Ovary (tissue), 10 donors: ENCODE measurements at regions of chr17 and their contacts with region 1.

Region 1: DNA sequence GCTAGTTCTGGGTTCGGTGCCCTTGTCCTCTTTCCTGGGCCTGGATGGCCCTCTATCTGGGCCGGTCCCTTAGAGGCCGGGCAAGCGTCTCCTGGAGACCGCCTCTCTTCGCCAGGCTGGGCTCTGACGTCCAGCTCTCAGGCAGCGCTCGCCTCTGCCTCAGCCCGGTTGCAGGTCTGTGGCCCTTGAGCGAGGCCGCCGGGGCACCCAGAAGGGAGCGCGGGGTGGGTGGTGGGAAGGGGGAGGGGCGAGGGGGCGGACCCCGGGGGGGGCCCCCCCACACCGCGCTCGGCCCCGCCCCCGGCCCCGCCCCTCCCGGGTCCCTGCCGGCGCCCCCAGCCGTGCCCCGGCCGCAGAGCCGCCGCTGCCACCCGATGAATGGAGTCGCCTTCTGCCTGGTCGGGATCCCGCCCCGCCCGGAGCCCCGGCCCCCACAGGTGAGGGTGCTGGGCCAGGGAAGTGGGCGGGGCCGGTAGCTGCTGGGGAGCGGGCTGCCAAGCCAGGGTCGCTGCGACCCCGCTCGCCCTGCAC is at the start of gene ARHGAP23:
- DNase-seq: peak; percentile 69 to 80 (median 75)
- H3K4me3 ChIP-seq: peak within 1 kb of the TSS; percentile 68
- H3K27ac ChIP-seq: peak within 1 kb of the TSS; percentile 84
- H3K4me1 ChIP-seq: peaks cover 3% of the 10 kb centered on the region
- H3K27me3 ChIP-seq: no peaks in the 10 kb centered on the region
- CTCF ChIP-seq: no peak
- EP300 ChIP-seq: no peak
- POLR2A ChIP-seq: no peak
- total RNA-seq, gene ARHGAP23: 13.7 to 76.4 (median 48.9) TPM

Region 2: DNA sequence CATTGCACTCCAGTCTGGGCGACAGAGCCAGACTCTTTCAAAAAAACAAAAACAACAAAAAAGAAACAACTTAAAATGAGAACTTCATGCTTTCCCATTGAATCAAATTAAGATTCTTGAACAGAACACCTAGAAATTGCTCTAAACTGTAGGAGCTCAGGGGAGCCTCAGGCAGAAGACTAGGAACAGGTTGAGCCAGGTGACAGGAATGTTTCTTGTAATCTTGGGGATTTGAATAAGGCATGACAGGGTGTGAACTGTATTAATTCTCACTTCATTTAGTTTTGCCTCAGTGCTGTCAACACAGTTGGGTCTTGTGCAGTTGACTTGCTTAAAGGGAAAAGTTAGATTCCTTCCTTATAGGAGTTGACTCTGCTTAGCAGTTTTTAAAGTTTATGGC is 48.7 kb before region 1 on chr17:
- intact Hi-C with region 1: no loop called
- DNase-seq: no peak
- H3K4me3 ChIP-seq: no peak overlapping the region
- H3K27ac ChIP-seq: no peak overlapping the region
- H3K4me1 ChIP-seq: no peaks in the 10 kb centered on the region
- H3K27me3 ChIP-seq: no peaks in the 10 kb centered on the region
- CTCF ChIP-seq: no peak
- EP300 ChIP-seq: no peak
- POLR2A ChIP-seq: no peak

Region 3: GRCh38 chr17:38464723-38465390 is 36.7 kb after region 1 on chr17:
- intact Hi-C with region 1: loop called in 2 of 4 experiments (anchors 5 to 10 kb)
- DNase-seq: peak; percentile 94 to 95 (median 95)
- H3K4me3 ChIP-seq: peak overlapping the region; percentile 55
- H3K27ac ChIP-seq: peak overlapping the region; percentile 85 to 91
- H3K4me1 ChIP-seq: peaks cover 23% of the 10 kb centered on the region
- H3K27me3 ChIP-seq: no peaks in the 10 kb centered on the region
- CTCF ChIP-seq: no peak
- EP300 ChIP-seq: no peak
- POLR2A ChIP-seq: no peak

Region 4: GRCh38 chr17:38469875-38470274 is 41.7 kb after region 1 on chr17:
- intact Hi-C with region 1: loop called in 2 of 4 experiments (anchors 5 to 10 kb)
- DNase-seq: no peak
- H3K4me3 ChIP-seq: no peak overlapping the region
- H3K27ac ChIP-seq: no peak overlapping the region
- H3K4me1 ChIP-seq: peaks cover 21% of the 10 kb centered on the region
- H3K27me3 ChIP-seq: no peaks in the 10 kb centered on the region
- CTCF ChIP-seq: no peak
- EP300 ChIP-seq: no peak
- POLR2A ChIP-seq: no peak

Region 5: DNA sequence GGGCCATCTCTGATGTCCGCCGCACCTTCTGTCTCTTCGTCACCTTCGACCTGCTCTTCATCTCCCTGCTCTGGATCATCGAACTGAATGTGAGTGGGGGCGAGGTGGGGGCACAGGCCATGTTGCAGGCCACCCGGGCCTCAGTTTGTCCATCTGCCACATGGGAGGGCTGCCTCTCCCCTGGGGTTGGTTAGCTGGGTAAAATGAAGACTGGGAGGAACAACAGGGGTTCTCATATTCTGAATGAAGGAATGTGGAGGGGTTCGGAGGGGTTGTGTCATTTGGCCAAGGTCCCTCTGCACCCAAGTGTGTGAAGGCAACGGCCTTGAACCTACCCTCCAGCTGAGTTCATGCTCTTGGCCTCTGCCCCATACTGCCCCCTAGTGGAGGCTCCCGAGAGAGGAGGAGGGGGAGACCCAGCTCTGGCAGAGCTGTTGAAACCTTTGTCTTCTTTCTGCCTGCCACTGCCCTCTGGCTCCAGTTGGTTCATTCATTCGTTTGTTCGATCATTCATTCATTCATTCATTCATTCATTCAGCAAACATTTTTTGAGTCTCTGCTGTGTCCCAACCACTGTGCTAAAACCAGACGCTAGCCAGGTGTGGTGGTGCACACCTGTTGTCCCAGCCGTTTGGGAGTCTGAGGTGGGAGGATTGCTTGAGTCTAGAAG is 1225.6 kb after region 1 on chr17:
- intact Hi-C with region 1: no loop called
- DNase-seq: peak in 3 of 5 donors; percentile 50 to 61 (median 57)
- H3K4me3 ChIP-seq: no peak overlapping the region
- H3K27ac ChIP-seq: no peak overlapping the region
- H3K4me1 ChIP-seq: peaks cover 8% of the 10 kb centered on the region
- H3K27me3 ChIP-seq: no peaks in the 10 kb centered on the region
- CTCF ChIP-seq: peak in 2 of 3 donors; percentile 12
- EP300 ChIP-seq: no peak
- POLR2A ChIP-seq: no peak